Heart right ventricle (tissue), 16 donors: ENCODE measurements at regions of chr15 and their contacts with region 1.

Region 1: DNA sequence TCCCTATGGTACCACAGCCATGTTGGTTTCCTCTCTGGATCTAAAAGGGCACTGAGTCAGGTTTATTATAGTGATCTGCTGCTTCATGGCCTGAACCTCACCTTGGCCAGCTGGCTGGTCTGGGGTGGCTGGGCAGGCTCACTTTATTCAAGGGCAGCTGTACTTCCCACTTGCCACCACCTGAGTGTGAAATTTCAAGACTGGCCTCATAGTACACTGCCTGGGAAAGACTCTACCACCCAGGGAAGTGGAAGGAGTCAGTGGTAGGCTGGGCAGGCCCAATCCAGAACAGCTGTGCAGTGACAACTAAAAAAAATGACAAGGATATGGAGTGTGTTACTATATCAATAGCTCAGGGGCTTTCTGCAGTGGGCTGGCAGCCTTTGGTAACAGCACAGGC is 8.8 kb downstream of the SNUPN start:
- DNase-seq: no peak
- ATAC-seq: no peak
- H3K4me3 ChIP-seq: no peak overlapping the region
- H3K27ac ChIP-seq: no peak overlapping the region
- H3K4me1 ChIP-seq: peaks cover 0 to 26% (median 21%) of the 10 kb centered on the region in 9 donors
- H3K27me3 ChIP-seq: no peaks in the 10 kb centered on the region
- CTCF ChIP-seq: no peak

Region 2: GRCh38 chr15:75523011-75523410 is 93.8 kb before region 1 on chr15:
- intact Hi-C with region 1: loop called in 2 of 10 experiments (anchors 5 to 10 kb)
- DNase-seq: no peak
- ATAC-seq: no peak
- H3K4me3 ChIP-seq: no peak overlapping the region
- H3K27ac ChIP-seq: no peak overlapping the region
- H3K4me1 ChIP-seq: peaks cover 0 to 3% (median 0%) of the 10 kb centered on the region in 9 donors
- H3K27me3 ChIP-seq: no peaks in the 10 kb centered on the region
- CTCF ChIP-seq: no peak

Region 3: GRCh38 chr15:75542386-75542797 is 74.4 kb before region 1 on chr15:
- intact Hi-C with region 1: no loop called
- DNase-seq: no peak
- ATAC-seq: peak in 6 of 8 donors; percentile 35 to 82 (median 54)
- H3K4me3 ChIP-seq: no peak overlapping the region
- H3K27ac ChIP-seq: peak overlapping the region in 8 of 10 donors; percentile 16 to 79 (median 45)
- H3K4me1 ChIP-seq: peaks cover 5 to 53% (median 28%) of the 10 kb centered on the region in 9 donors
- H3K27me3 ChIP-seq: no peaks in the 10 kb centered on the region
- CTCF ChIP-seq: no peak

Region 4: GRCh38 chr15:75554717-75555116 is 62.0 kb before region 1 on chr15:
- intact Hi-C with region 1: no loop called
- DNase-seq: no peak
- ATAC-seq: peak in 1 of 8 donors; percentile 27
- H3K4me3 ChIP-seq: no peak overlapping the region
- H3K27ac ChIP-seq: no peak overlapping the region
- H3K4me1 ChIP-seq: peaks cover 0 to 35% (median 21%) of the 10 kb centered on the region in 9 donors
- H3K27me3 ChIP-seq: no peaks in the 10 kb centered on the region
- CTCF ChIP-seq: no peak